ENCODE measurements at regions of chr16 and their contacts with region 1.

Region 1: DNA sequence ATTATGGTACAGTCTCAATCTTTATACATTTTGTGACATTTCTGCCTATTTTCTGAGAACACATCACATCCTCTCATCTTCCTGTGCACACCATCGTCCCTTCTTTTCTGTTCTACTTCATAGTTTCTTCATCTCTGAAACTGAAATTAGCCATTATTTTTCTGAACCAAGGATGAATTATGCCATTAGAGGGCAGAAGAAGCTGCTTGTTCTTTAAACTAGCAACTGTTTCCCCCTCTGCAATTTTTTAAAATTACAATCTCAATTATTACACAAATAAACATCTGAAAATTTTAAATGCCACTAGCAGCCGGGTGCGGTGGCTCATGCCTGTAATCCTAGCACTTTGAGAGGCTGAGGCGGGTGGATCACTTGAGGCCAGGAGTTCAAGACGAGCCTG is 41.3 kb downstream of the RBBP6 start:
- DNase-seq: no peak
- ATAC-seq: no peak
- H3K4me3 Mint-ChIP-seq: no peak overlapping the region
- H3K27ac Mint-ChIP-seq: no peak overlapping the region
- H3K4me1 Mint-ChIP-seq: peaks cover 8% of the 10 kb centered on the region
- H3K27me3 Mint-ChIP-seq: peaks cover 9% of the 10 kb centered on the region

Region 2: DNA sequence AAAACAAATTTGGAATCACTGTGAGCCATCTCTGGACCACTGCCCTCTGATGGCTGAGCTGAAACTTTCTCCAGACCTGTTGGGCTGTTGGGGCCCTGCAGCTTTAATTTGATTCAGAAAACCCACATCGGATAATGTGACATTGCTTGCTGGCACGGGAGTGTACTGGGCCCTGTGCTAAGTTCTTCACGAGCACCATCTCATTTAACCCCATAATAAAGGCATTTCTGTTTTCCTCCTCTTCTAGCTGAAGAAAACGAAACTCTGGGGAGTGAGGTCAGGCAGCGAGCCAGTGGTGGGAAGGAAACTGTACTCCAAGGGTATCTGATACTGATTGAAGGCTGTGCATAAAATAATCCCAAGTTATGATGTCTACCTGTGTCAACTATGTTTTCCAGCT is 114.3 kb after region 1 on chr16:
- CTCF ChIA-PET with region 1: no interaction called
- POLR2A ChIA-PET with region 1: no interaction called
- intact Hi-C with region 1: loop called in 1 of 2 experiments (anchors 10 kb)
- DNase-seq: no peak
- ATAC-seq: no peak
- H3K4me3 Mint-ChIP-seq: no peak overlapping the region
- H3K27ac Mint-ChIP-seq: no peak overlapping the region
- H3K4me1 Mint-ChIP-seq: no peaks in the 10 kb centered on the region
- H3K27me3 Mint-ChIP-seq: peaks cover 7% of the 10 kb centered on the region

Region 3: GRCh38 chr16:24810951-24811843 is 230.5 kb after region 1 on chr16:
- CTCF ChIA-PET with region 1: no interaction called
- POLR2A ChIA-PET with region 1: no interaction called
- intact Hi-C with region 1: loop called in 1 of 2 experiments (anchors 5 kb)
- DNase-seq: no peak
- ATAC-seq: no peak
- H3K4me3 Mint-ChIP-seq: no peak overlapping the region
- H3K27ac Mint-ChIP-seq: peak overlapping the region; percentile 1
- H3K4me1 Mint-ChIP-seq: no peaks in the 10 kb centered on the region
- H3K27me3 Mint-ChIP-seq: no peaks in the 10 kb centered on the region